A673 (cell line): ENCODE measurements at regions of chrX and their contacts with region 1.

Region 1: GRCh38 chrX:7109838-7110793 is 37.4 kb upstream of the STS start:
- DNase-seq: peak; percentile 49
- H3K4me3 ChIP-seq: no peak overlapping the region
- H3K27ac ChIP-seq: no peak overlapping the region
- H3K4me1 ChIP-seq: peaks cover 14% of the 10 kb centered on the region
- H3K27me3 ChIP-seq: no peaks in the 10 kb centered on the region
- CTCF ChIP-seq: no peak

Region 2: DNA sequence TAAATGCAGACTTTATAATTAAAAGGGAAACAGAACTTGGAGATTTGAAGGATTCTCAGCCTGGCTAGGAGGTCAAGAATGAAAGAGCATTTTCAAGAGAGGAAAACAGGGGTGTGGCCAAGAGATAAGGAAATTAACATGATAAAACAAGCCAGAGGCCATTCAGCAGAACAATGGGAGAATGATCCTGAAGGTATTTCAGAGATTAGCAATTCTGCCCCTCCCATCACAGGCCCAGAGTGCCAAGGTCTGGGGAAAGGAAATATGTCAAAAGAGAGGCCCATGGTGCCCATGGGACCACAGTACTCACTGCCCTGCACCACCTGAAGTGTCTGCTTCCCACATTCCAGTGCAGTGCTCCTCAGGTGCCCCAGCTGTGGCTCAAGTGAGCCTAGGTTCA is 151.1 kb before region 1 on chrX:
- CTCF ChIA-PET with region 1: no interaction called
- POLR2A ChIA-PET with region 1: no interaction called
- intact Hi-C with region 1: no loop called
- DNase-seq: no peak
- H3K4me3 ChIP-seq: no peak overlapping the region
- H3K27ac ChIP-seq: no peak overlapping the region
- H3K4me1 ChIP-seq: no peaks in the 10 kb centered on the region
- H3K27me3 ChIP-seq: no peaks in the 10 kb centered on the region
- CTCF ChIP-seq: no peak

Region 3: DNA sequence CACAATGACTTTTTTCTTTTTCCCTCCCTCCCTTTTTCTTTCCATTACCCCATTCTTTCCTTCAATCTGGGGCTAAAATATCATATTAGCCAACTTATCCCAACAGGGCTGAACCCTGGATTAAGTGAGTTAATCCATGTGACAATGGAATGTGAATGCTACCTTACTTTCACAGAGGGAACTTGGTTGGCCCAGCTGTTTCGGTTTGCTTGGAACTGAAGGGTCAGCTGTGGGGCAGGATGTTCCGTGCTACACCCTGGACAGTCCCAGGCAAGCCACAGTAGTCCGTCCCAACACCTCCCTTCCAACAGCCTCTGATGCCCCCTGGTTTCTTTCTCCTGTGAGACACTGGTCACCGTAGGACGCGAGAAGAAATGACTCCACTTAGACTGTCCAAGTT is 57.6 kb before region 1 on chrX:
- CTCF ChIA-PET with region 1: no interaction called
- POLR2A ChIA-PET with region 1: no interaction called
- intact Hi-C with region 1: loop called (anchors 2 kb)
- DNase-seq: no peak
- H3K4me3 ChIP-seq: no peak overlapping the region
- H3K27ac ChIP-seq: no peak overlapping the region
- H3K4me1 ChIP-seq: no peaks in the 10 kb centered on the region
- H3K27me3 ChIP-seq: no peaks in the 10 kb centered on the region
- CTCF ChIP-seq: no peak